ENCODE measurements at regions of chr15 and their contacts with region 1.

Region 1: GRCh38 chr15:78540141-78540928 is at the start of gene PSMA4:
- DNase-seq: peak; percentile 78
- H3K4me3 ChIP-seq: peak within 1 kb of the TSS; percentile 88 to 95 (median 90)
- H3K27ac ChIP-seq: peak within 1 kb of the TSS; percentile 89
- H3K4me1 ChIP-seq: peaks cover 10% of the 10 kb centered on the region
- H3K27me3 ChIP-seq: no peaks in the 10 kb centered on the region
- CTCF ChIP-seq: no peak
- total RNA-seq, gene PSMA4: 144 to 173 TPM

Region 2: GRCh38 chr15:78437762-78438302 is 102.5 kb before region 1 on chr15 and contains the start of gene IREB2:
- CTCF ChIA-PET with region 1: no interaction called
- dilution Hi-C with region 1: no loop called
- in situ Hi-C with region 1: no loop called
- intact Hi-C with region 1: loop called (anchors 2 kb)
- DNase-seq: peak; percentile 97
- H3K4me3 ChIP-seq: peak within 1 kb of the TSS; percentile 92 to 100 (median 96)
- H3K27ac ChIP-seq: peak within 1 kb of the TSS; percentile 88
- H3K4me1 ChIP-seq: peaks cover 9% of the 10 kb centered on the region
- H3K27me3 ChIP-seq: no peaks in the 10 kb centered on the region
- CTCF ChIP-seq: no peak
- total RNA-seq, gene IREB2: 31.8 to 36.9 TPM

Region 3: DNA sequence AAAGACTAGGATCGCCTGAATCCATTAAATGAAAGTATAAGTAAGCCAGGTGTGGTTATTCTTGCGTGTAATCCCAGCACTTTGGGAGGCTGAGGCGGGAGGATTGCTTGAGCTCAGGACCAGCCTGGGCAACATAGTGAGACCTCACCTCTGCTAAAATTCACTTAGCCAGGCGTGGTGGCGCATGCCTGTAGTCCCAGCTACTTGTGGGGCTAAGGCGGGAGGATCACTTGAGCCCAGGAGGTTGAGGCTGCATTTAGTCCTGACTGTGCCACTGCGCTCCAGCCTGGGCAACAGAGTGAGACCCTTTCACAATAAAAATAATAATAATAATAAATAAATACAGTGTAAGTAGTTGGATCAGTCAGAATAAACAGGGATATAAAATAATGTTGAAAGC is 58.4 kb before region 1 on chr15:
- CTCF ChIA-PET with region 1: no interaction called
- dilution Hi-C with region 1: loop called (anchors 10 kb)
- in situ Hi-C with region 1: no loop called
- intact Hi-C with region 1: no loop called
- DNase-seq: no peak
- H3K4me3 ChIP-seq: no peak overlapping the region
- H3K27ac ChIP-seq: no peak overlapping the region
- H3K4me1 ChIP-seq: no peaks in the 10 kb centered on the region
- H3K27me3 ChIP-seq: no peaks in the 10 kb centered on the region
- CTCF ChIP-seq: no peak

Region 4: DNA sequence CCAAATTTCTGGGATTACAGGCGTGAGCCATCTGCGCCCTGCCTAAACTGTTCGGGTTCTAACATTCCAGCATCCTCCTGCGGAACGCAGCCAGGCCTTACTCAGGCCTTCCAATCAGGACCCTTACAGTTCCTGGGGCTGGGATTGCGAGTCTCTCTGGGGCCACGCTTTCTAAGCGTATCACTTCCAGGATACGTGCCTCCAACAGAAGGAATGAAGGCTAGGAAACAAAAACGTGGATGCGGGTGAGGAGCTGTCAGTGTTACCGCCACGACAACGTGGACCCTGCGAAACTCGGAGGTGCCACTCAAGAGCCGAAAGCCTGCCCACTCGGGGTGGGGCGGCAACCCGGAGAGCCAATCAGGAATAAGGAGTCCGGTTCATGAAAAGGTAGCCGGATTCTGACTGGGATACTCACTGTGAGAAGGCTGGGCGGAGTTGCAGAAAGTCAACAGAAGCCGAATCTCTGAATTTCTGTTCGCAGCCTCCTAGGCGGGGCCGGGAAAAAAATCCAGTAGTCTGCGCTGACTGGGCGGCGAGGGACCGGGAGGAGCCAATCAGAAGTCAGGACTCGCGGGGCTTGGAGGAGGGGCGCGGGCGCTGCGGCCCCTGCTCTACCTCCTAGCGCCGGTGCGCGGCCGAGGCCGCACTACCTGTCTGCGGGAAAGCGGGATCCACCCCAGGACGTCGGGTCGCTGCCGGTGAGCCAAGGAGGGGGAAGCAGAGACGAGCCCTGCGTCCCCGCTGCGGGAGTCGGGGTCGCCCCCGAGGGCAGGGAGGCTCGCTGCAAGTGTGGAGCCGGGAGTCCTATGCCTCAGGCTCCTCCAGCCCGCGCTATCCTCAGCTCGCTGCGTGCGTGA is 33.1 kb before region 1 on chr15 and contains the start of gene HYKK:
- CTCF ChIA-PET with region 1: no interaction called
- dilution Hi-C with region 1: no loop called
- in situ Hi-C with region 1: loop called in 1 of 2 experiments (anchors 5 kb)
- intact Hi-C with region 1: loop called (anchors 1 kb)
- DNase-seq: peak; percentile 98
- H3K4me3 ChIP-seq: peak within 1 kb of the TSS; percentile 81 to 95 (median 91)
- H3K27ac ChIP-seq: peak within 1 kb of the TSS; percentile 15
- H3K4me1 ChIP-seq: peaks cover 5% of the 10 kb centered on the region
- H3K27me3 ChIP-seq: peaks cover 2% of the 10 kb centered on the region
- CTCF ChIP-seq: peak in 1 of 2 donors; percentile 33
- total RNA-seq, gene HYKK: 2.9 to 4.3 TPM

Region 5: GRCh38 chr15:78565097-78565951 is 25.0 kb after region 1 on chr15 and contains the start of gene CHRNA5:
- CTCF ChIA-PET with region 1: interaction called, 3 read pairs
- dilution Hi-C with region 1: no loop called
- in situ Hi-C with region 1: no loop called
- intact Hi-C with region 1: loop called (anchors 1 kb)
- DNase-seq: peak; percentile 83
- H3K4me3 ChIP-seq: peak within 1 kb of the TSS; percentile 54 to 73 (median 70)
- H3K27ac ChIP-seq: peak within 1 kb of the TSS; percentile 9
- H3K4me1 ChIP-seq: peaks cover 5% of the 10 kb centered on the region
- H3K27me3 ChIP-seq: no peaks in the 10 kb centered on the region
- CTCF ChIP-seq: no peak
- total RNA-seq, gene CHRNA5: 2.2 to 13.9 TPM